GM23248 (cell line): ENCODE measurements at regions of chr11 and their contacts with region 1.

Region 1: DNA sequence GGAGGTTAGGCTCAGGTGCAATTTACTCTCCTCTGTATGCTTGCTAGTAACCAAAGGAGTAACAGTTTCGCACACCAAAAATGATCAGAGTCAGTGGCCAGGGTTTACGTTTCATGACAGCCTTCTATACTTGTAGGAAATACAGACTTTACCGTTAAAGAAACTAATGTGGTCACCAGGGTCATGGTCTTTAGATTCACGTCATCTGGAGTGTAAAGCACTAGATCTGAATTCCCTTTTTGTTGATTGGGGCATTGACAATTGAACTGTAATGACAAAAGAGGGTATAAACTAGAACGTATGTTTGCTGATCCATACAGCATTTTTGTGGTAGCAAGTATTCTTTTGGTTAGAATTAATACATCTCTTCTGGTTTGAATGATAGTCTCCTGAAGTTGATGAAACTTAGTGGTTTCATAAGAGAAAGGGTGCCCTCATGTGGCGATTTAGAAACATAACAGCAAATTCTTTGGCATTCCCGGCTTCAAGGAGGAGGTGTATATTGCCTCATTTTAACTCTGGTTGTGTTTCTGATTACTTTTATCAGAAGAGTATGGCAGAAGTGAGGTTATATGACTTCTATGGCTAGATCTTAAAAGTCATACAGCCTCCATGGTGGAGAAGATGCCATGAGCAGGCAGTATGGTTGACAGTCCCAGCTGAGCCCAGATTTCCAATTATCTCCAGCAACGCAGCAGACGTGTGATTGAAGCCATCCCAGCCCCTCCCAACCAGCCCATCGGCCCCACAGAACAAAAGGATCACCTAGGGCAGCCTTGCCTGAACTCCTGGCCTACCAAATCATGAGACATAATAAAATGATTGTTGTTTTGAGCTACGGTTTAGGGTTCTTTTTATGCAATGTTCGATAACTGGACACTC is 35.1 kb downstream of the MMP7 start:
- DNase-seq: peak; percentile 85
- H3K4me3 ChIP-seq: no peak overlapping the region
- H3K27ac ChIP-seq: no peak overlapping the region
- H3K4me1 ChIP-seq: peaks cover 17% of the 10 kb centered on the region
- H3K27me3 ChIP-seq: no peaks in the 10 kb centered on the region

Region 2: DNA sequence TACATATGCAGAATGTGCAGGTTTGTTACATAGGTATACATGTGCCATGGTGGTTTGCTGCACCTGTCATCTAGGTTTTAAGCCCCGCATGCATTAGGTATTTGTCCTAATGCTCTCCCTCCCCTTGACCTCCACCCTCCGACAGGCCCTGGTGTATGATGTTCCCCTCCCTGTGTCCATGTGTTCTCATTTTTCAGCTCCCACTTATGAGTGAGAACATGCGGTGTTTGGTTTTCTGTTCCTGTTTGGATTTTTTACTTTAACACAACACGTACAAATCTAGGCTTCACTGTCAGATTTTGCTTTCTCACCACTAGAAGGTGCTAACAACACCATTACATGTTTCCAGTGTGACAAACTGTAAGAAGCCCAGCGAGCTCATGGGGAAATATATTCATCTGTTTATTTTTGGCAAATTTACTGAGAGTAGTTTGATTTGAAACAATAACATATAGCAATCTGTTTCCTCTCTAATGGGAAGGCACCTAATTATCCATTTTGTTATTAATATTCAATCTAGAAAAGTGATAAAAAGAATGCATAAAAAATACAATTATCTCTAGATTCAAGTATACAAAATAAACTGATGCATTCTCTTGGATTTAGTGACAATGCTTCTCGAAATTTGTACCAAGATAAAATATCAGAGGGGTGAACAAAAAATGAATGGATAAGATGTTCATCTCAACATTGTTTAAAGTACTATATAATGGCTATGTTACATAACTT is 201.4 kb before region 1 on chr11:
- in situ Hi-C with region 1: loop called (anchors 10 kb)
- DNase-seq: peak; percentile 79
- H3K4me3 ChIP-seq: no peak overlapping the region
- H3K27ac ChIP-seq: no peak overlapping the region
- H3K4me1 ChIP-seq: peaks cover 10% of the 10 kb centered on the region
- H3K27me3 ChIP-seq: no peaks in the 10 kb centered on the region

Region 3: GRCh38 chr11:102384419-102385079 is 110.9 kb before region 1 on chr11:
- in situ Hi-C with region 1: loop called (anchors 5 kb)
- DNase-seq: no peak
- H3K4me3 ChIP-seq: no peak overlapping the region
- H3K27ac ChIP-seq: no peak overlapping the region
- H3K4me1 ChIP-seq: no peaks in the 10 kb centered on the region
- H3K27me3 ChIP-seq: no peaks in the 10 kb centered on the region

Region 4: DNA sequence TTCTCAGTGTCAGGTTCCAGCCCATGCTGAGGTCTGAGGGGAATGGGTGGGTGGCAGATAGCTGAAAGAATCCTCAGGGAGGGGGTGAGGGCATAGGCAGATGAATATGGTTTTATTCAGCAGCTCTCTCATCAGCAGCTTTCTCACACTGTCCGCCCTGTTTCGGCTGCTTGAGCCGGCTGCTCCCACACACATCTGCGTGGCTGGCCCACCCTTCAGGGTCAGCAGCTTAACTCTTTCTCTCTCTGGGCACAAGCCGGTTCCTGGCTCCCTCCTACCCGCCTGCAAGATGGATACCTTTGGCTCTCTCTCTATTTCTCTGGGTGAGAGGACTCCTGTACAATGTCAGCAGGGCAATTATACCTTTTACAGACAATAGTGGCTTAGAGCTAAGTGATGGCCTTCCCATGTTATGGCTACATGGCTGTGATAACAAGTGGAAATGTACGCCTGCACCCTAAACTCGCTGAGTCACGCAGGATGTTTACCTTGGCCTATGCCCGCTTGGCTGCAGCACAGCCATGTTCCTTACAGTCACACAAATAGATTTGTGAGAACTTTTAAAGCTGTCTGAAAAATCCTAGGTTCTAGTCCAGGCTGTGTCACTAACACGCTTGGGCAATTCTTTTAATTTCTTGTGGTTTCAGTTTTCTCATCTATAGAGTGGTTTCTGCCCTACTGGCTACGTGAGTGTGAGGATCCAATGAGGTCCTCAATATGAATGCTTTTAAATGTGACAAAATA is 125.6 kb after region 1 on chr11:
- in situ Hi-C with region 1: no loop called
- DNase-seq: peak; percentile 24
- H3K4me3 ChIP-seq: no peak overlapping the region
- H3K27ac ChIP-seq: no peak overlapping the region
- H3K4me1 ChIP-seq: no peaks in the 10 kb centered on the region
- H3K27me3 ChIP-seq: no peaks in the 10 kb centered on the region